ENCODE measurements at regions of chr19 and their contacts with region 1.

Region 1: GRCh38 chr19:18846862-18847548 is 15.2 kb downstream of the UPF1 start:
- DNase-seq: peak; percentile 90
- ATAC-seq: peak; percentile 81

Region 2: GRCh38 chr19:18589380-18590272 is 257.4 kb before region 1 on chr19:
- intact Hi-C with region 1: loop called (anchors 10 kb)
- DNase-seq: peak; percentile 80
- ATAC-seq: peak; percentile 72

Measured in left ventricle myocardium superior (tissue), 1 donor.